Lower lobe of right lung (tissue), 2 donors: ENCODE measurements at regions of chr6 and their contacts with region 1.

Region 1: DNA sequence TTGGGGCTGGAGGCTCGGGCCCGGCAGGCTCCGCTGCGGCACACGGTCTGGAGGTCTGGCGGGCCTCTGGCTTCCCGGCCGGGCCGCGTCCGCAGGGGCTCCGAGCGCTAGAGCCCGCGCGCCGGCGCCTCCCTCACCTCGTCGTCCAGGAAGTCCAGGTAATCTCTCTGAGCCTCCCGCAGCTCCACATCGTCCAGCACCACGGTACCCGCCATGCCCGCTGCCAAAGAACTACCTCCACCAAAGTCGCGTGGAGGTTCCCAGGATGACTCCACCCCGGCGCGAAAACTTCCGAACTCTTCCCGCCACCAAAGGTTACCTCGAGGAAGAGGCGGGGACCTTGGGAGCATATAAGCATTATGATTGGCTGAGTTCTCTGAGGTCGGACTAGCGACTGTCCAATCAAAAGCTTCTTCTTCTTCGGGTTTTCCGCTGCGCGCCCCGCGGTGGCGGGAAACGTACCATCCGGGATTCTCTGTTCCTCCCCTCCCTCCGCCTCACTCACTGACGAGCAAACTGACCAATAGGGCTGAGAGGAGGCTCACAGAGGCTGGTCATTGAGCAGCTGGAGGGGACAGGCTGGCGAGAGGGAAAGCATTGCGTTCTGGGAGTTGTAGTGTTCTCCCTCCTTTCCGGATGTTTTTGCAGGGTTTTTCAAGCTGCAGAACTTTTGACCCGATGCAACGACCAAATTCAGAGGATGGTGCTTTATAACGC is at the start of gene MCM3:
- DNase-seq: peak; percentile 98
- ATAC-seq: peak; percentile 99 to 100
- H3K4me3 ChIP-seq: peak within 1 kb of the TSS; percentile 91
- H3K27ac ChIP-seq: peak within 1 kb of the TSS; percentile 76
- H3K4me1 ChIP-seq: peaks cover 12% of the 10 kb centered on the region
- H3K27me3 ChIP-seq: no peaks in the 10 kb centered on the region
- CTCF ChIP-seq: peak; percentile 22
- total RNA-seq, gene MCM3: 25.6 TPM

Region 2: DNA sequence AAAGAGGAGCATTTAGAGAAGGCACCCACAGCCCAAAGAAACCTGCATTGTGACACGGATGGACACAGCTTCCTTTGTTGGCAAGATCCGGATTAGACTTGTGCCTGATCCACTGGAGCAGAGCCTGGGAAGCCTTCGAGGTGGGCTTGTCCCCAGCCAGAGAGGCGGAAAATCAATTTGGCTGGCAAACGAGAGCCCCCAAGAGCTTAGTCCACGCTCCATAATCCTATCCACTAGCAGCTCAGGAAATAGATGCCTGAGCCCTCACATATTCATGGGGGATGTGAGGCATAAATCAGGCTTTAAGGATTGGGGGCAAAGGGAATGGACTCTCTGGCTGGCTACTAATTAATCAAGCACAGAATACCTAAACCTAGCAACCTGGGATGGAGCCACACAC is 335.1 kb before region 1 on chr6:
- intact Hi-C with region 1: no loop called
- DNase-seq: no peak
- ATAC-seq: no peak
- H3K4me3 ChIP-seq: no peak overlapping the region
- H3K27ac ChIP-seq: no peak overlapping the region
- H3K4me1 ChIP-seq: no peaks in the 10 kb centered on the region
- H3K27me3 ChIP-seq: no peaks in the 10 kb centered on the region
- CTCF ChIP-seq: no peak

Region 3: GRCh38 chr6:52399511-52400312 is 115.1 kb after region 1 on chr6:
- intact Hi-C with region 1: loop called (anchors 10 kb)
- DNase-seq: no peak
- ATAC-seq: peak; percentile 61 to 81
- H3K4me3 ChIP-seq: no peak overlapping the region
- H3K27ac ChIP-seq: no peak overlapping the region
- H3K4me1 ChIP-seq: peaks cover 12% of the 10 kb centered on the region
- H3K27me3 ChIP-seq: no peaks in the 10 kb centered on the region
- CTCF ChIP-seq: peak; percentile 80

Region 4: DNA sequence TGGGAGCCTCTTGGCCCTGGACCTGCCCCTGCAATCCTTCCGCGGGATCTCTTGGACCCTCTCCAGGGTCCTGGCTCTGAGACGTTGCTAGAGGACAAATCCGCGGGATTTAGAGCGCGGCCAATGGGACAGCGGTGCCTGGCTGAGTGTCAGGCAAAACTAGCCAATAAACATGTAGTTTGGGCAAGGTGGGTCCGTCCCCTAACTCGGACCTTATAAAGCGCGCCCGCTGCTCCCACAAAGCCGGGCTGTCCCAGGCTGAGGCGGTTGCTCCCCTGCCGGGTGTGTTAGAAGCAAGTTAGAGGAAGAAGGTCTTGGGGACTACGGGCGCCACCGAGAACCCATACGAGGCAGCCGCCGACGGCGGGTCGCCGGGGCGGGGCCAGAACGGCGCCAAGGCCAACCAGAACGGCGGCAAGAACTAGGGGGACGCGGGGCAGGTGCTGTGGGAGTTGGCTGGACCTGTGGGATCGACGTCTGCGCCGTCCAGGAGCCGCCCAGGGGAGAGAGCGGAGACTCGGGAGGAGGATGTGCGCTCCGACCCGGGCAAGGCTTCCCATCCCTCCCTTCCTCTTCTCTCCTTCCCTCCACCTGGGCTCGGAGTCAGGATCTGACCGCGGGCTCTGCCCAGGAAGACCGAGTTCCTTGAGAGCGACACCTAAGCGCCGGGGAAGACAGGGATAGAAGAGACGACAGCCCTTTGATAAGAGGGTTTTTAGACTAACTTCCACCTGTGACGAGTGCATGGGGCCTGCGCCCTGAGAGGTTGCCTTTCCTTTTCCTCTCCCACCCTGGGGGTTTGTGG is 379.8 kb after region 1 on chr6:
- intact Hi-C with region 1: loop called (anchors 10 kb)
- DNase-seq: peak; percentile 91
- ATAC-seq: peak; percentile 97 to 99
- H3K4me3 ChIP-seq: peak overlapping the region; percentile 65
- H3K27ac ChIP-seq: peak overlapping the region; percentile 74
- H3K4me1 ChIP-seq: peaks cover 14% of the 10 kb centered on the region
- H3K27me3 ChIP-seq: no peaks in the 10 kb centered on the region
- CTCF ChIP-seq: no peak